Motor neuron (in vitro differentiated cells): ENCODE measurements at regions of chr11 and their contacts with region 1.

Region 1: DNA sequence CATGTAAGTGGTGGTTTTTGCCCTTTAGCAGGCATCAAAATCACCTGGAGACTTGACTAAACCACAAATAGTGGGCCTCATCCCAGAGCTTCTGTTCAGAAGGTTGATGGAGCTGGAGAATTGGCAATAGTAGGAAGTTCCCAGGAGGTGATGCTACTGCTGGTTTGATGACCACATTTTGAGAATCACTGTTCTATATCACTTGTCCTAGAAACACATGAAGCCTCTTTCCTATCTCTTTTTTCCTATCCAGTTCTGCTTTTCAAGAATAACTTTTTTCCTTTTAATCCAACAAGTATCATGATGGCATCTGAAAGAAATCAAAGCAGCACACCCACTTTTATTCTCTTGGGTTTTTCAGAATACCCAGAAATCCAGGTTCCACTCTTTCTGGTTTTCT is at the start of gene OR5D13:
- ATAC-seq: no peak
- H3K4me3 ChIP-seq: no peak within 1 kb of the TSS
- H3K27ac ChIP-seq: no peak within 1 kb of the TSS
- H3K4me1 ChIP-seq: no peaks in the 10 kb centered on the region
- total RNA-seq, gene OR5D13: 0.33 TPM in 1 of 8 experiments, not detected in the others

Region 2: DNA sequence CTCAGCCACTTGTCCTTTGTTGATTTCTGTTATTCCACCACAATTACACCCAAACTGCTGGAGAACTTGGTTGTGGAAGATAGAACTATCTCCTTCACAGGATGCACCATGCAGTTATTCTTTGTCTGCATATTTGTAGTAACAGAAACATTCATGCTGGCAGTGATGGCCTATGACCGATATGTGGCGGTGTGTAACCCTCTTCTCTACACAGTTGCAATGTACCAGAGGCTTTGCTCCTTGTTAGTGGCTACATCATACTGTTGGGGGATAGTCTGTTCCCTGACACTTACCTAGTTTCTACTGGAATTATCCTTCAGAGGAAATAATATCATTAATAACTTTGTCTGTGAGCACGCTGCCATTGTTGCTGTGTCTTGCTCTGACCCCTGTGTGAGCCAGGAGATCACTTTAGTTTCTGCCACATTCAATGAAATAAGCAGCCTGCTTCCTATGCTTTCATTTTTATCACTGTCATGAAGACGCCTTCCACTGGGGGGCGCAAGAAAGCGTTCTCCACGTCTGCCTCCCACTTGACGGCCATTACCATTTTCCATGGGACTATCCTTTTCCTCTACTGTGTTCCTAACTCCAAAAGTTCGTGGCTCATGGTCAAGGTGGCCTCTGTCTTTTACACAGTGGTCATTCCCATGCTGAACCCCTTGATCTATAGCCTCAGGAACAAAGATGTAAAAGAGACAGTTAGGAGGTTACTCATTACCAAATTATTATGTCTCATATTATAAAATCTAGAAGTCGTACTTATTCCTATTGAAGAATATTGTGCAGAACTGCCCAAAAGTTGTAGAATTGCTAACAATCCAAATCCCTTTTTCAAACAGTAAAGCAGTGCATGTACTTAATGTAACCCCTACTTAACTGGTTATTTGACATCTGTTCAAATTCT is 57.9 kb before region 1 on chr11:
- in situ Hi-C with region 1: no loop called
- ATAC-seq: peak in 1 of 8 experiments; percentile 26
- H3K4me3 ChIP-seq: no peak overlapping the region
- H3K27ac ChIP-seq: no peak overlapping the region
- H3K4me1 ChIP-seq: no peaks in the 10 kb centered on the region

Region 3: DNA sequence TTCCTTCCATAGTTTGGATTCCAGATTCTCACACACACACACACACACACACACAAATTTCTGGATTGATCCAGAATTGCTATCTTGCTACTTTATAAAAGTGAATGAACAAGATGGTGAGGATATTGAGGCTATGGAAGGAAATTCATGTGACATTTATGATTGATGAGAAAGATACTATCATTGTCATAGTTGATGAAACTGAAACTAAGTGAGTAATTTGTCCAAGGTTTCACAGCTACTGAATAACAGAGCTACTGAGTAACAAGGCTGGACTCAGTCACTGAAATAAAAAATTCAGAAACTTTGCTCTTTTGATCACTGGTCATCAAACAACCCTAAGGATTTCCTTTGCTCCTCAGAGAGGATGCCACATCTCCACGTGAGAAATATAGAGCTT is 81.6 kb after region 1 on chr11:
- in situ Hi-C with region 1: loop called in 1 of 9 experiments (anchors 25 kb)
- ATAC-seq: no peak
- H3K4me3 ChIP-seq: no peak overlapping the region
- H3K27ac ChIP-seq: no peak overlapping the region
- H3K4me1 ChIP-seq: no peaks in the 10 kb centered on the region